AG04449 (cell line): ENCODE measurements at regions of chr2 and their contacts with region 1.

Region 1: DNA sequence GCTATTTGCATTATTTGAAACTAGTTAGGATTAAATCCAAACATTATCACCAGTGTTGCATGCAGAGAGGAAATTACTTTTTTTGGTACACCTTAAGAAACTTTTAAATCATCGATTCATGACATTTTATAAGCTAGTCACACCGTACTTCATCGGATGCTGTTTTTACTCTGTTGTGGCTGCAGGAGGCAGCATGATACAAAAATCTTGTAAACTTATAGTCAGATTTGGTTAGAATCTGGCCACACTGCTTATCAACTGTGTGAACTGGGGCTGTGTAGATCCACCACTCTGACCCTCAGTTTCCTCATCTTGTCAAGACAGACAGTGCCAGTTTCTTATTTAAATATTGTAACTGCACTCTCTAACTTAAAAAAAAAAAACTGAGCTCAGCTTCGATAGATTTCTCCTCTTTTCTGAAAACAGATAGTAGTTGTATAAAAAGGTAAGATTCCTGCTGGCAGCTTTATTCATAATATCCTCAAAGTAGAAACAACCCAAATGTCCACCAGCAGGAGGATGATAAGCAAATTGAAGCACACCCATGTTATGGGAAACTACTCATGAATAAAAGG is 77.8 kb downstream of the RAPGEF4 start:
- DNase-seq: no peak
- H3K4me3 ChIP-seq: no peak overlapping the region
- CTCF ChIP-seq: no peak

Region 2: GRCh38 chr2:172586245-172586891 is 227.0 kb before region 1 on chr2:
- CTCF ChIA-PET with region 1: no interaction called
- POLR2A ChIA-PET with region 1: no interaction called
- DNase-seq: no peak
- H3K4me3 ChIP-seq: no peak overlapping the region
- CTCF ChIP-seq: no peak

Region 3: DNA sequence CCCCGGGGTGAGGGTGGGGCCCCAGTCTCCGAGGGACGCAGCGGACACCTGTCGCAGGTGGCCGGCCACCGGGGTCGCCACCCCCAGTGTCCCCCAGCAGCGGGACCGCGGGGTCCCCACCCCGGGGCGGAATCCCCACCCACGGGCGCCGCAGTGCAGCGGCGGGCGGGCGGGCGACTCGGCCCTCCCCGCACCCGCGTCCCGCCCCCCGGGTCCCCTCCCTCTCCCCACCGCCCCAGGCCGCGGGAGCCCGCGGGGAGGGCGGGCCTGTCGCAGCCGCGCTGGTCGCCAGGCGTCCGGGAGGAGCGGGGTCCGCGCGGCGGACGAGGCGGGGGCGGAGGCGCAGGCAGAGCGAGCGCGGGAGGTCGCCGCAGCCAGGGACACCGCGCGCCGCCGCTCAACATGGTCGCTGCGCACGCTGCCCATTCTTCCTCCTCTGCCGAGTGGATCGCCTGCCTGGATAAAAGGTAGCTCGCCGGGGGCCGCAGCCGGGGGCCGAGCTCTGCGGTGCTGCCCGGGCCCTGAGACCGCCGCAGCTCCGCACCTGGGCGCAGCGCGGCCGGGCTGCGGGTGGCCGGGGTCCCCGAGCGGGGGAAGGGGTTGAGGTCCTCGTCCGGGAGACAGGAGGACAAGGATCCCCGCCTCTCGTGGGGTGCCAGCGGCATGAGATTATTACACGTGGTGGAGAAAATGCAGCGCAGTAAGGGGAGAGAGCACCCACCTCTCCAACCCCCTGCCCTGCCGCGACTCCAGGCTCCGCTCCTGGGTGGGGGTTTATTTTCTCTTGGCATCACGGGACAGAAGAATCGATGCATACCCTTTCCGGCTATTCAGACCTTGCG is 77.6 kb before region 1 on chr2 and contains the start of gene RAPGEF4:
- CTCF ChIA-PET with region 1: no interaction called
- POLR2A ChIA-PET with region 1: no interaction called
- DNase-seq: no peak
- H3K4me3 ChIP-seq: peak within 1 kb of the TSS; percentile 47
- CTCF ChIP-seq: no peak

Region 4: GRCh38 chr2:172938713-172939375 is 125.4 kb after region 1 on chr2:
- CTCF ChIA-PET with region 1: interaction called, 254 read pairs
- POLR2A ChIA-PET with region 1: no interaction called
- DNase-seq: no peak
- H3K4me3 ChIP-seq: no peak overlapping the region
- CTCF ChIP-seq: no peak

Region 5: GRCh38 chr2:173239644-173240043 is 426.2 kb after region 1 on chr2:
- CTCF ChIA-PET with region 1: no interaction called
- POLR2A ChIA-PET with region 1: no interaction called
- DNase-seq: no peak
- H3K4me3 ChIP-seq: no peak overlapping the region
- CTCF ChIP-seq: no peak